Thyroid gland (tissue), 4 donors: ENCODE measurements at regions of chr17 and their contacts with region 1.

Region 1: DNA sequence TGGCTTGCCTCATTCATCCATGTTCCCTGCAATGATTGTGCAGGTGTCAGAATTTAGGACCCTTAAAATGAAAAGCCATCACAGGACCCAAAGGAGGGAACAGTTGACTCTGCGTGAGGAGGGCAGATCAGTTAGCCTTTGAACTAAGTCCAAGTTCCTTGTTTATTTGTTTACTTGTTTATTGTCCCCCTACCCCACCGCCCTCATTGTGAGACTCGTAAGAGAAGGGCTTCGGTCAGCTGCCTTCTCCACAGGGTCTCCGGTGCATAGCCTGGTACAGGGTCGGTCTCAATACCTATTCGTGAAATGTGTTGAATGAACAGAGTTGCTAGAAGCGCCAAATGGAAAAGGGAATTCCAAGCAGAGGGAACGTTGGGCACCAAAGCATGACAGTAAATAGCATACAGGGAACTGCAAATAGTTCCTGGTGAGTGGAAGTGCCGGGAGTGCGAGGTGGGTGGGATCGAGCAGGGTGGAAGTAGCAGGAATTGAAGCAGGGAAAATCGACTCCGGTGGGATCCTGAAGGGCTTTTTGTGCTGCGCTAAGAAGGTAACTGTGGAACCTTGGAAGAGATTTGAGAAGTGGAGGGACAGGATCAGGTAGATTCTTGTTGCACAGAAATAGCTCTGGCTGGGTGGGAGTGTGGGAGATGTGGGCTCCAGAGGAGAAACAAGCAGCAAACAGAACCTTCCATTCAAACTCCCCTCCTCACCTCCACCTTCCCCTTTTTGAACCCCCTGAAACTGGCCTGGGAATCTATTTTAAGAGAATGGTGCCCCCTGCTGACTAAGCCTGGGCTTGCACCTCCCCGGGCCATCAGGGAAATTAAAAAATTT is 12.7 kb downstream of the SLC35B1 start:
- DNase-seq: peak; percentile 62 to 64
- H3K4me3 ChIP-seq: no peak overlapping the region
- H3K27ac ChIP-seq: no peak overlapping the region
- H3K4me1 ChIP-seq: peaks cover 0 to 16% of the 10 kb centered on the region in 2 donors
- H3K27me3 ChIP-seq: no peaks in the 10 kb centered on the region
- CTCF ChIP-seq: peak; percentile 84 to 99 (median 93)
- POLR2A ChIP-seq: no peak

Region 2: DNA sequence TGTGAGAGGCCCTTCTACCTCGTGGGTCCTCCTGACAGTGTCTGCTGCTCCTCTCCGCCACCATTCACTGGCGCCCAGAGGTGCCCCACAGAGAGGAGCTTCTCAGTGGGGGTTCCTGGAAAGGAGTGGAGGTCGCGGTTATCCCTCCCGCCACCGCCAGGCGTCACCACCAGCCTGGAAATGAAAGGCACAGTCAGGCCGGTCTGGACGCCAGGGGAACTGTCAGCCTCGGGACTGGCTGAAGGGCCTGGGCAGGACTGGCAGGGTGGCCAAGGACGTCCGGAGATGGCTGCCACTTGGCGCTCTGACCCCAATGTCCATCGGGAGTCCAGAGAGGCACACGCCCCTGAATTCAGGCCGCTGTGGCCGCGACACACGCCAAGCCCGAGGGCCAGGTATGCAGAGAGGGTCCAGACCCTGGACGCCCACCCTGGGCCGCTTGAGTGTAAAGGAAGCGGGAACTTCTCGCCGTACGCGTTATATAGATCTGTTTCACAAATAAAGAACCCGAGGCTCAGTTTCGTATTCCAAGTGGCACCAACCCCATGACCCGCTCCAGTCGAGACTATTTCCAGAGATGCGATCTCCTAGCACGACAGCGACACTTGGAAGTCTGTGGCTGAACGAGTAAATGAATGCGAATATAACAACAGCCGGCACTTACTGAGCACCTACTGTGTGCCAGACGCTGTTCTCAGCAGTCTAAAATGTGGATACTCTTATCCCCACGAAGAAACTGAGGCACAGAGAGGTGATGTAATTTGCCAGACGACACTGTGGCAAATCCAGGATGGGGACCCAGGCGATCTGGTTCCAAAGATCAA is 127.0 kb before region 1 on chr17:
- intact Hi-C with region 1: loop called (anchors 2 kb)
- DNase-seq: peak; percentile 93 to 94
- H3K4me3 ChIP-seq: peak overlapping the region in 1 of 3 donors; percentile 38
- H3K27ac ChIP-seq: peak overlapping the region; percentile 41 to 83 (median 72)
- H3K4me1 ChIP-seq: peaks cover 14 to 35% of the 10 kb centered on the region in 2 donors
- H3K27me3 ChIP-seq: no peaks in the 10 kb centered on the region
- CTCF ChIP-seq: peak; percentile 88 to 99 (median 95)
- POLR2A ChIP-seq: no peak